ENCODE measurements at regions of chr7 and their contacts with region 1.

Region 1: GRCh38 chr7:19117091-19117869 is at the start of gene TWIST1:
- DNase-seq: peak; percentile 77
- ATAC-seq: peak; percentile 78
- H3K4me3 ChIP-seq: peak within 1 kb of the TSS; percentile 99
- H3K27ac ChIP-seq: no peak within 1 kb of the TSS
- H3K4me1 ChIP-seq: peaks cover 16% of the 10 kb centered on the region
- H3K27me3 ChIP-seq: no peaks in the 10 kb centered on the region
- CTCF ChIP-seq: no peak
- total RNA-seq, gene TWIST1: 15.7 and 22.3 TPM in 2 replicates

Region 2: GRCh38 chr7:18352339-18353255 is 764.7 kb before region 1 on chr7:
- CTCF ChIA-PET with region 1: interaction called, 9 read pairs
- POLR2A ChIA-PET with region 1: interaction called, 5 read pairs
- intact Hi-C with region 1: loop called (anchors 2 kb)
- DNase-seq: peak; percentile 83
- ATAC-seq: peak; percentile 86
- H3K4me3 ChIP-seq: peak overlapping the region; percentile 39
- H3K27ac ChIP-seq: peak overlapping the region; percentile 8; the same call in 1 of the 2 replicates
- H3K4me1 ChIP-seq: peaks cover 14% of the 10 kb centered on the region
- H3K27me3 ChIP-seq: no peaks in the 10 kb centered on the region
- CTCF ChIP-seq: peak; percentile 87

Region 3: DNA sequence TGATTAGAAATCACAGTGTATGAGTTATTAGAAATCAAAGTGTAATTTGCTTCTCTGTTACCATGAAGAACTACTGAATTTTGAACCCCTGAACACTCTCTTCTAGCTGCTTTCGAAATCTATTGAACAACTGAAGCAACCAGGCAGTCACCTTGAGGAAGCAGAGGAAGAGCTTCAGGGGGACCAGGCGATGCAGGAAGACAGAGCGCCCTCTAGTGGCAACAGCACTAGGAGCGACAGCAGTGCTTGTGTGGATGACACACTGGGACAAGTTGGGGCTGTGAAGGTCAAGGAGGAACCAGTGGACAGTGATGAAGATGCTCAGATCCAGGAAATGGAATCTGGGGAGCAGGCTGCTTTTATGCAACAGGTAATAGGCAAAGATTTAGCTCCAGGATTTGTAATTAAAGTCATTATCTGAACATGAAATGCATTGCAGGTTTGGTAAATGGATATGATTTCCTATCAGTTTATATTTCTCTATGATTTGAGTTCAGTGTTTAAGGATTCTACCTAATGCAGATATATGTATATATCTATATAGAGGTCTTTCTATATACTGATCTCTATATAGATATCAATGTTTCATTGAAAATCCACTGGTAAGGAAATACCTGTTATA is 451.1 kb before region 1 on chr7:
- CTCF ChIA-PET with region 1: interaction called, 5 read pairs
- POLR2A ChIA-PET with region 1: no interaction called
- intact Hi-C with region 1: loop called (anchors 2 kb)
- DNase-seq: peak; percentile 81
- ATAC-seq: peak; percentile 70
- H3K4me3 ChIP-seq: no peak overlapping the region
- H3K27ac ChIP-seq: no peak overlapping the region
- H3K4me1 ChIP-seq: peaks cover 25% of the 10 kb centered on the region
- H3K27me3 ChIP-seq: no peaks in the 10 kb centered on the region
- CTCF ChIP-seq: peak; percentile 97

Region 4: GRCh38 chr7:18844735-18845134 is 272.5 kb before region 1 on chr7:
- CTCF ChIA-PET with region 1: no interaction called
- POLR2A ChIA-PET with region 1: no interaction called
- intact Hi-C with region 1: no loop called
- DNase-seq: peak; percentile 48
- ATAC-seq: peak; percentile 73
- H3K4me3 ChIP-seq: peak overlapping the region; percentile 20; the same call in 1 of the 2 replicates
- H3K27ac ChIP-seq: peak overlapping the region; percentile 19; the same call in 1 of the 2 replicates
- H3K4me1 ChIP-seq: peaks cover 25% of the 10 kb centered on the region
- H3K27me3 ChIP-seq: no peaks in the 10 kb centered on the region
- CTCF ChIP-seq: no peak

Region 5: DNA sequence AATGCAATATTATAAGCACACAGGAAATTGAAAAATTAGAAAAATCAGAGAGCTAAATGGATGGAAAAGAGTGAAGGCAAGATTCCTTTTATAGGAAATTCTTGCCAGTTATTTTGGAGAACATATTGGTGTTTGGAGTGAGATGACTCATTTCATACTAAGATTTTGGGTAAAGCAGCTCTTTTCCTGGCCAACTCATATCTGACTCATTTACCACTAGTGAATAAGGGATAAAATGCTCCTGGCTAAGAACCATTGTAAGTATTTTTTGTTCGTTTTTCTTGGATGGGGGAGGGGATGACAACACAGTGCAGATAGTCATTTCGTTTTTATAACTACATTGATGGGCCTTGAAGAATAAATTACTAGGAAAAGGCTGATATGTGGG is 139.2 kb before region 1 on chr7:
- CTCF ChIA-PET with region 1: no interaction called
- POLR2A ChIA-PET with region 1: no interaction called
- intact Hi-C with region 1: loop called (anchors 2 kb)
- DNase-seq: peak; percentile 94
- ATAC-seq: peak; percentile 61
- H3K4me3 ChIP-seq: peak overlapping the region; percentile 54
- H3K27ac ChIP-seq: peak overlapping the region; percentile 97
- H3K4me1 ChIP-seq: peaks cover 50% of the 10 kb centered on the region
- H3K27me3 ChIP-seq: no peaks in the 10 kb centered on the region
- CTCF ChIP-seq: no peak

Region 6: GRCh38 chr7:19262826-19263225 is 145.5 kb after region 1 on chr7:
- CTCF ChIA-PET with region 1: no interaction called
- POLR2A ChIA-PET with region 1: no interaction called
- intact Hi-C with region 1: loop called (anchors 2 kb)
- DNase-seq: peak; percentile 12
- ATAC-seq: no peak
- H3K4me3 ChIP-seq: no peak overlapping the region
- H3K27ac ChIP-seq: no peak overlapping the region
- H3K4me1 ChIP-seq: no peaks in the 10 kb centered on the region
- H3K27me3 ChIP-seq: no peaks in the 10 kb centered on the region
- CTCF ChIP-seq: no peak

Region 7: DNA sequence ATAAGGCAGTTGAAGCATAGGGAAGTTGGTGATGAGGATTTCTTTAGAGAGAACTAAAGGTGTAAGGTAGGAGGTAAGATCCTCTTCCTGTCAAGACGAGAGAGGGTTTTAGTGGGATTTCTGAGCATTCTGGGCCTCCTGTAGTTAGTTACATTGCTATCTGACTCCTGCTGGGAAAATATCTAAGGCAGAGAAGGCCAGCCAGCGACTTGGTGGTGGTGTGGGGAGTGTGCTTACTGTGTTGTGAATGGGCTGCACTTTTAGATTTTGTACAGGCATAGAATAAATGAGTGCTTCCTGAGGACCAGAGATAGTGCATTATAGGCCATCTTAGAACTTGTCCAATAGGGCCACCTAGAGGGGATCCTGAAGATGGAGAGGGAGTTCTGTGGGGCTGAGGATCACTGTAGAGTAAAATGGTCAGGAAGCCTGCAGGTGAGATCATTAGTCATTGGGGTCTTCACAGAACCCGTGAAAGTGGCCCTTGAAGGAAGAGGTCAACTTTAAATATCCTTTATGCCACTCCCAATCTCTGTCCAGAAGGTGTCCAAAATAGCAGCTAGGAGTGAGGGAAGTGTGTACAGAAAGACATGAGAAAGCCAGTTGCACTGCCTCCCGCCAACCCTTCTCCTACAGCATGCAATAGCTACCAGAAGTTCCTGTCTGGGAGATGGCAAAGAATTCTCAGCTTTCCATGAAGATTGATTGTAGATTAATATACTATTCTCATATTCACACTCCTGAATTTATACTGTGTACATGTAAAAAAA is 324.9 kb after region 1 on chr7:
- CTCF ChIA-PET with region 1: interaction called, 14 read pairs
- POLR2A ChIA-PET with region 1: no interaction called
- intact Hi-C with region 1: loop called (anchors 1 kb)
- DNase-seq: peak; percentile 64
- ATAC-seq: peak; percentile 100
- H3K4me3 ChIP-seq: no peak overlapping the region
- H3K27ac ChIP-seq: no peak overlapping the region
- H3K4me1 ChIP-seq: no peaks in the 10 kb centered on the region
- H3K27me3 ChIP-seq: no peaks in the 10 kb centered on the region
- CTCF ChIP-seq: peak; percentile 80

Region 8: GRCh38 chr7:19621740-19622139 is 504.5 kb after region 1 on chr7:
- CTCF ChIA-PET with region 1: interaction called, 6 read pairs
- POLR2A ChIA-PET with region 1: no interaction called
- intact Hi-C with region 1: loop called (anchors 2 kb)
- DNase-seq: peak; percentile 72
- ATAC-seq: peak; percentile 94
- H3K4me3 ChIP-seq: 0 out of 2 replicates have a peak overlapping the region, but pooled peaks have one; percentile 19
- H3K27ac ChIP-seq: no peak overlapping the region
- H3K4me1 ChIP-seq: 0 out of 2 replicates have a peak, but pooled peaks cover 4% of the 10 kb centered on the region
- H3K27me3 ChIP-seq: peaks cover 12% of the 10 kb centered on the region; the same call in 1 of the 2 replicates
- CTCF ChIP-seq: peak; percentile 66

Measured in PC-3 (cell line).